ENCODE measurements at regions of chr2 and their contacts with region 1.

Region 1: DNA sequence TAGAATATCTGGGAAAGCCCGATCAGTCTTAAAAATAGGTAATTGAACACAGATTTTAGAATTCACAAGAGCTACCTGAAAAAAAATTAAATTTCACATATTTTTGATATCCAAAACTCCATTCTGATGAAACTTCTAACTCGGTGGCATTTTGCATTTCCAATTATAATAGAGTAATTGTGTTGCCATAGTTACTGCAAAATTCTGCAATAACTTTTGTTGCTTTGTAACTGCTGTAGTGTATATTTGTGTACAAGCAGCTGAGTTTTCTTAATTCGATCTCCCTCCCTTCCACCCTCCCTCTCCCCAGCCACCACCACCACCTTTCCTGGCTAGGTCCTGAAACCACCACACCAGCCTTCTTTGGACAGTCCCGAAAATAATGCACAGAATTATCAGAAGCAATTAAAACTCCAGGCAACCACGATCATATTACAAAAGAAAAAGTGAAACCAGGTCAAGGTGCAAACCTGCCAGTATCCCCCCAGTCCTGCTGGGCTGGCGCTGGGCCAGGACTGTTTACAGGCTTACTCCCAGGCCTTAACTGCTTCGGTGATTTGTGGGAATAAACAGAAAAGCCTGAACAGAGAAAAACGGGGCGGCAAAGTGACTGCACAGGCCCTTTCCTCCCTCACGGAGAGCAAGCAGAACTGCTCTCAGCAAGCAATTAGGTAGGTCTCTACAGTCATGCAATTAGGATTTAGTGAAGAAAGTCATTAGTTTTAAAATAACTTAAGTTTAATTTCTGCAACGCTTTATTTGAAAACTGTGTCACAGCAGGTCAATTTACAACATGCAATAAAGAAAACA is 1.5 kb downstream of the HDAC4 start:
- DNase-seq: peak; percentile 83

Region 2: GRCh38 chr2:238629064-238629463 is 770.3 kb before region 1 on chr2:
- intact Hi-C with region 1: no loop called
- DNase-seq: no peak

Region 3: DNA sequence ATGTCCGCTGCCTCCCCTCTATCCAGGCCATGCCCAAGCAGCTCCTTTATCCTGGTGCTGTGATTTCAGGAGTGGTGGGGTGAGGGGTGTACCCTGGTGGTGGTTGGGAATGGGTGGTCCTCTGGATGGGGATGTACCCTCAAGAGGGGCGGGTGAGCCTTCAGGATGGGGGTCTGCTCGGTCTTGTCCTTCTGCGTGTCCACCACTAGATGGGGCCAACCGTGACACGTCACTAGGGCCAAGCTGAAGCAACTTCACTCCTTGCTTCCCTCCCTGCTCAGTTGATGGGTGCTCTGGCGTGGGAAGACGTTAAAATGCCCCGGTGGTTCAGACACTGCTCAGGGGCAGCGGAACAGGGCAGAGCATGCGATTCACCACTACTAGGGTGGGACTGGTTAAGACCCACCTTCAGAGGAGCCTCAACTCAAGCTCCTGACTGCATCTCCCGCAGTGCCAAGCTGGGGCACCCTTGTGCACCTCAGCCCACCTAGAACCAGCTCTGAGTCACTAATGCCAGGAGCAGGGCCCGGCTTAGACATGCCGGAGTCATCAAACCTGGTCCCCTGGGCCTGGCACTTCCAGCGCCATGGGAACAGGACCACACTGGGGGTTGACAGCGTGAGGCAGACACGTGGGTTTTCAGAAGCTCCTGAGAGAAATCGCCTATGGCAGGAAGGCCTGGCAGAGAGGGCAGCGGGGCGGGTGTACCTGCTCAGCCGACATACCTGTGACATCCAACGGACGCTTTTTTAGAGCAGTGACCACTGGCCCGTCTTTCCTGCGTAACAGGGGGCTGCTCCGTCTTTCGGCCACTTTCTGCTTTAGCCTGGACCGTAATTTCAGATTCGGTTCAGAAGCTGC is 255.2 kb before region 1 on chr2:
- intact Hi-C with region 1: loop called in 1 of 2 experiments (anchors 10 kb)
- DNase-seq: no peak

Region 4: DNA sequence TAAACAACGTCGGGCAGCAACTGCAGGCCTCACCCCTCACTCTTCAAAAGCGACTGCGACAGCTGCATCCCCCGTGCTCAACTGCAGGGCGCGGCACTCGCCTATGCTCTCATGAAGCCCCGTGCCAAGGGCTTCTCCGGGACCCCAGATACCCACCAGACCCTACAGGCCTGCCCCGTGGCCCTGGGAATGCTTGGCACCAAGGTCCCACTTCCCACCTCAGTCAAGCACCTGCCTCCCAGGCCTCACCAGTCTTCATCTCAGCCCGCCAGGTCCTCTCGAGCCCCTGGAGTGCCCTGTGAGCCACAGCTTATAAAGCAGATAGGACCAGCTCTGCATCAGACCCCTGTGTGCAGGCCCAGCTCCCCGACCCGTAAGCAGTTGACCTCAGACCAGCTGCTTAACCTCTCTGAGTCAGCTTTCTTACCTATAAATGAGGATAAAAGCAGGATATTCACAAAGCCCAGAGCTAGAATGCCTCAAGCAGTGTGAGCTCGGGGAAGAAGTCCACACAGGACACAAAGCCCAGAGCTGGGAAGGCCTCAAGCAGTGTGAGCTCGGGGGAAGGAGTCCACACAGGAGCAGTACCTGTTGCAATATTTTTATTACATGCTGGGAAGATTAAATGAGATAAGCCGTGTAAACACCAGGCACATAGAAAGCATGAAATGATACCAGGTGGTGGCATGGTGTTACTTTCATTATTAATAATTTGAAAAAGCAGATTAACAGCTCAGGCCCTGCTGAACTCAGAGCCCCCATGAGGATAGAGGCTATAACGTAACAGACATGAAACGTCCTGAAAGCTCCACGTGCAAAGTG is 95.4 kb before region 1 on chr2:
- intact Hi-C with region 1: no loop called
- DNase-seq: peak; percentile 70

Region 5: DNA sequence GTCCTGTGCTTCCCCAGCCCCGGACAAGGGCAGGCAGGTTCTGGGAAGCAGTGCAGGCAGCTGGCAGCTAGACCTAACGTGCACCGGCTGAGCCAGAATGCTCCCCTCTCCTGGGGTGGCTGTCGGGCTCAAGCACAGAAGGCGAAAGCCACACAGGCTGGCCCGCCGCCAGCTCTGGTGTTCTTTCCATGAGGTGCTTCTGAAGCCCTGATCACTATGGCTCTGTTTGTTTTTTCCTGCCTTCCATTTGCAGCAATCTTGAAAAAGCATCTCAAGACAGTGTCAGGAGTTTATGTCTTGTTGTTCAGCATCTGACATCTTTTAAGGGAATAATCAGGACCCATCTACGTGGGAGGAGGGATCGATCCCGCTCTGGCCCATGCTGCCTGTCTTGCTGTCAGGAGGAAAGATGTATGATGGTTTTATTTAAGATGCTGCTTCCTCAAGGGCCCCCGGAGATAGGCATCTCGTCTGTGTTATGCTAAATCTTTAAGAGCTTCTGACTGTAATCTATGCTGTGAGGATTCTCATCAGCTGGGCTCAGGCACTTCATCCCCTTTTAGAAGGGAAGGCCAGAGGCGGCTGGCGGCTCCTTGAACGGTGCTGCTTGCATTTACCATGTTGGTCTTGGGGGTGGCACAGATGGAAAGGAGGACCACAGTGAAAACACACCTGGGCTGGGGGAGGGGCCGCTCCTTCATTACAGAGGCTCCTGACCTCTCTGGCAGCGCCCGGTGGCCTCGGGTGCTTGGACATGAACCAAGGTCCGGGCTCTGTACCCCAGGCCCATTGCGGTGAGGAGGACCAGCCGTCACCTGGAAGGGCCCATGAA is 120.0 kb after region 1 on chr2:
- intact Hi-C with region 1: no loop called
- DNase-seq: peak; percentile 75

Region 6: GRCh38 chr2:239882331-239882732 is 483.0 kb after region 1 on chr2:
- intact Hi-C with region 1: loop called in 1 of 2 experiments (anchors 10 kb)
- DNase-seq: peak; percentile 79

Measured in posterior vena cava (tissue), 2 donors.